ENCODE measurements at regions of chr6 and their contacts with region 1.

Region 1: DNA sequence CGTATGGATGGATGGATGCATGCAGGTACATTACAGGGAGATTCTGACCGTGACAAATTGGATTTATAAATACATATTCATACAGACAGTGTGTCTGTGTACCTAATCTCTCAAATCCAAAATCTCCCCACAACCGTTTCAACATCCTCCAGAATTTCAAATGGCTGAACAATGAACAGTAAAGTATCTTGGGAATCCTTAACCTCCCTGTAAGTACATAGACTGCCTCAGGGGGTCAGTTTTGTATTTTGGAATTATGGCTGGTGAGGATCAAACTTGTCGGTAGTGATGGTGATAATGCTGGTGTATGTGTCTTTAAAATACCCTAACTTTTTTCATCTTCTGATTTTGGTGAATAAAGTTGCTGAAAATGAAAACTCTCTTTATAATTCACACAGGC is 246.2 kb downstream of the FOXC1 start:
- DNase-seq: no peak
- H3K4me3 ChIP-seq: no peak overlapping the region
- H3K27ac ChIP-seq: no peak overlapping the region
- H3K27me3 ChIP-seq: no peaks in the 10 kb centered on the region
- CTCF ChIP-seq: no peak

Region 2: DNA sequence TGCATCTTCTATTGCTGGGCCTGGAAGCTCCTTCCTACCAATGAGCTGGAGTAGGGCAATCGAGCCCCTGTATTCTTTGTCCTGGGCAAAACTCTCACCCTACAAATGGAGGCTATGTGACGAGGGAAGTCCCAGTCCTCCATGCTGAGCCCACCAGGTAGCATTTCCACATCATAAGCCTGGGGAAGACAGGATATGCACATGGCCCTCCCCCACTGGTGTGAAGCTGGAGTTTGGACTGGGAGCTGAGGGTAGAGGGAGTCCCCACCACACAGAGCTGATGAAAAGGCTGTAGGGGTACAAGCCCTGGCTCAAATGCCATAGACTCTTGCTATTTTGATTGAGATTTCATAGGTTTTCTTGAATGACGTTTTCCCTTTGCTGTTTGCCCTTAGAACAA is 345.7 kb before region 1 on chr6:
- CTCF ChIA-PET with region 1: no interaction called
- POLR2A ChIA-PET with region 1: interaction called, 10 read pairs
- DNase-seq: no peak
- H3K4me3 ChIP-seq: no peak overlapping the region
- H3K27ac ChIP-seq: no peak overlapping the region
- H3K27me3 ChIP-seq: peaks cover 6% of the 10 kb centered on the region
- CTCF ChIP-seq: no peak